Vagina (tissue), 2 donors: ENCODE measurements at regions of chr15 and their contacts with region 1.

Region 1: DNA sequence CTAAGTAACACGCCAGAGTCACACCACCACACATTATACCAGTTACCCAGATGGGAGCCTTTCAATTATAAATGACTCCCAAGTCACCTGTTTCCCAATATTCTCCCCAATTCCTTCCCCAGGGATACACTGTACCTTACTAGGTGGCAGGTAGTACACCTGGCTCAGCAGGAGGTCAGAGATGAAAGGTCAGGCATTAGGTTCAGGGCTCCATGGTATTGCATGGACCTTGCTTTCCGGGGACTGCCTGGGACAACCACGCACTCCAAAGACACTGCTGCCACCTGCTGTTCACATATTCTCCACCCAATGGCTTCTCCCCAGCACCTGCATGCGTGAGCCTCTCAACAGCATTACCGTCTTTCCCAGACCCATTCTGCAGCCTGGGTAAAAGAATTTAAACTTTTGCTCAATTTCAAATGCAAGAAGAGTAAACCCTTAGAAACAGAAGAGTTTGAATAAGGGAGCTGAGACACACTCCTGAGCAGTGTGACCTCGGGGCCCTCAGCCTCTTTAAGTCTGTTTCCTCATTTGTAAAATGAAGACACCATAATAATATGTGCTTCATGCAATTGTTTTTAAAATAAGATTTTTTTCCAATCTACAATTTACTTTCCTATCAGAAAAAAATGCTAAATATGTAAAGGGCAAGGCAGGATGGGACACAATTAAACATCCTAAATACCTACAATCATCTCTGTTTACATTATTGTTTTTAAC is 28.0 kb upstream of the LACTB start:
- DNase-seq: no peak
- H3K4me3 ChIP-seq: no peak overlapping the region
- H3K27ac ChIP-seq: no peak overlapping the region
- H3K4me1 ChIP-seq: no peaks in the 10 kb centered on the region
- H3K27me3 ChIP-seq: no peaks in the 10 kb centered on the region
- CTCF ChIP-seq: peak; percentile 82 to 94 (median 90)
- POLR2A ChIP-seq: no peak

Region 2: GRCh38 chr15:62782039-62782791 is 311.4 kb before region 1 on chr15:
- intact Hi-C with region 1: loop called (anchors 2 kb)
- DNase-seq: no peak
- H3K4me3 ChIP-seq: no peak overlapping the region
- H3K27ac ChIP-seq: peak overlapping the region; percentile 25
- H3K4me1 ChIP-seq: peaks cover 28% of the 10 kb centered on the region
- H3K27me3 ChIP-seq: no peaks in the 10 kb centered on the region
- CTCF ChIP-seq: peak; percentile 13 to 66 (median 33)
- POLR2A ChIP-seq: no peak

Region 3: DNA sequence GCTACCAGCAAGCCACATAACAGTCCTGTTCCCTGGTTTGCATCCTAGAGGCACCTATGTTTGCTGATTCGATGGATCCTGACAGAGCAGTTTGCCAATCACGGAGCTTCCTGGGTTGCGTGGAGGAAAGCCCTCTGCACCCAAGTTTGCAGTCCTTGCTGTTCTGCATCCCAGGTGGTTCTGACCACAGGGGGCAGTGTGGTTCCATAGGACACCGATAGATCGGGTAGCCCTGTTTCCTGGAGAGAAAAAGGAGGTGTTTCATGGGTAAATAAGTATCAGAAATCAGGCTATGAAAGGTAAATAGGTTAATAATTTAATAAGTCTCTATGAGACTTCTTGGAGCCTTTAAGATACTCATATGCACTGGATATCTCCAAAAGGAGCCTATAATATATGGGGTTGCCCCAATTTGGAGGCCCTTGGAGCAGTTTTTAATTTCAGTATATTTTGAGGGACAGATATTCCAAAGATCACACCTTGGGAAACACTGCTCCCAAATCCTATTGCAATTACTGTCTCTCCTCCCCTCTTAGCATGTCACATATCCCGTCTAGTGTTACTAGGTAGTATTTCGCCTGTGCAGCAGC is 245.7 kb before region 1 on chr15:
- intact Hi-C with region 1: loop called (anchors 5 kb)
- DNase-seq: peak in 1 of 2 donors; percentile 67
- H3K4me3 ChIP-seq: no peak overlapping the region
- H3K27ac ChIP-seq: no peak overlapping the region
- H3K4me1 ChIP-seq: peaks cover 9% of the 10 kb centered on the region
- H3K27me3 ChIP-seq: no peaks in the 10 kb centered on the region
- CTCF ChIP-seq: peak in 2 of 3 experiments; percentile 28 to 56
- POLR2A ChIP-seq: no peak

Region 4: DNA sequence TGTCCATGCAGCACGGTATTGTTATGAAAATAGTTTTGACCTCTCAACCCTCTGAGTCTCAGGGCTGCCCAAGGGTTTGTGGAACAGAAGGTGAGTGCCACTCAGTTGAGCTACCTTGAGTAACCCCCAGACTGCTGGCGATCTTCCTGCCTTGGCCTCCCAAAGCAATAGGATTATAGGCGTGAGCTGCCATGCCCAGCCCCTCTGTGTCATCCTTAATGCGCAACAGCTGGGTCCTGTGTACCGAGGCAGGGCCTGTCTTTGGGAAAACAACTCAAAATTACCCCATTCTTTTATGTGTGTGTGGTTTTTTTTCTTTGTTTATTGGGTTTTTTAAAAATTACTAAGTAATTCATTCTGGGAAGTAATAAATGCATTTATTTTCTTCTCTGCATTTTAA is 129.4 kb before region 1 on chr15:
- intact Hi-C with region 1: no loop called
- DNase-seq: no peak
- H3K4me3 ChIP-seq: no peak overlapping the region
- H3K27ac ChIP-seq: no peak overlapping the region
- H3K4me1 ChIP-seq: peaks cover 9% of the 10 kb centered on the region
- H3K27me3 ChIP-seq: no peaks in the 10 kb centered on the region
- CTCF ChIP-seq: no peak
- POLR2A ChIP-seq: no peak

Region 5: DNA sequence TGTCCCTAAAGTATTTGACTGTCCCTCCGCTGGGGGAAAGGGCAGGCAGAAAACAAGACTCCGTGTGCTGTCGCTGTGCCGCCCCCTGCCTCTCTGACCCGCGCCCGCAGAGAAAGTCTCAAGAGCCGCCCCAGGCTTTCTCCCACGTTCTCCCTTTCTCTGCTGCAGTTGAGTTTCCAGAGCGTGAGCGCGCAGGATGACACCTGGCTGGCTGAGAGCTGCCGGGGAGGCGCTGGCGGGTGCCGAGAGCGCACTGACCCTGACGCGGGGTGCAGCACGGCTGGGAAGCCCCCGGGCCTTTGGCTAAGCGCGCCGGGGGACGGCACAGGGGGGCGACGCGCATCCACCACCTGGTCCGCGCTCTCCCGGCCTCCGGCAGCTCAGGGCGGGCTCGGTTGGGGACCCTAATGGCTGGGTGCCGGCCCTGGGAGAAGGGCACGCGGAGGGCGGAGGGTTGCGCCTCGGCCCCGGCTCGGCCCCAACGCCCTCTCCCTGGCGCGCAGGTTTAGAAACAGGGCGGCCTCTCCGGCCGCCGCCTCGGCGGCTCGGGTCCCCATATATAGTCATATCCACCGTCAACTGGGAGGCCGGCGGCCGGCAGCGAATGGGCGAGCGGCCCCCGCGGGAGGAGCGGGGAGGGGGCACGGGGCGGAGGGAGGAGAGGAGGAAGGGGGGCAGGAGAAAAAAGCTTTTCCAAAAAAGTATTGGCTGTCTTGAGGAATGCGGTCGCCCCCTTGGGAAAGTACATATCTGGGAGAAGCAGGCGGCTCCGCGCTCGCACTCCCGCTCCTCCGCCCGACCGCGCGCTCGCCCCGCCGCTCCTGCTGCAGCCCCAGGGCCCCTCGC is 51.4 kb before region 1 on chr15 and contains the start of gene TPM1:
- intact Hi-C with region 1: loop called (anchors 5 kb)
- DNase-seq: no peak
- H3K4me3 ChIP-seq: peak within 1 kb of the TSS; percentile 70 to 77
- H3K27ac ChIP-seq: peak within 1 kb of the TSS; percentile 88
- H3K4me1 ChIP-seq: peaks cover 17% of the 10 kb centered on the region
- H3K27me3 ChIP-seq: no peaks in the 10 kb centered on the region
- CTCF ChIP-seq: no peak
- POLR2A ChIP-seq: peak in 1 of 2 donors; percentile 59
- total RNA-seq, gene TPM1: 498 TPM

Region 6: GRCh38 chr15:63166219-63166618 is 72.6 kb after region 1 on chr15:
- intact Hi-C with region 1: no loop called
- DNase-seq: no peak
- H3K4me3 ChIP-seq: no peak overlapping the region
- H3K27ac ChIP-seq: no peak overlapping the region
- H3K4me1 ChIP-seq: no peaks in the 10 kb centered on the region
- H3K27me3 ChIP-seq: no peaks in the 10 kb centered on the region
- CTCF ChIP-seq: no peak
- POLR2A ChIP-seq: no peak